Activated naive CD4-positive, alpha-beta T cell treated with anti-CD3 and anti-CD28 coated beads for 36 hours (primary cell): ENCODE measurements at regions of chr7 and their contacts with region 1.

Region 1: GRCh38 chr7:130615583-130615982 is 53.0 kb downstream of the COPG2 start:
- DNase-seq: no peak
- H3K4me3 Mint-ChIP-seq: no peak overlapping the region
- H3K27ac Mint-ChIP-seq: no peak overlapping the region
- H3K4me1 Mint-ChIP-seq: no peaks in the 10 kb centered on the region
- H3K27me3 Mint-ChIP-seq: no peaks in the 10 kb centered on the region

Region 2: GRCh38 chr7:130560970-130561369 is 54.6 kb before region 1 on chr7:
- CTCF ChIA-PET with region 1: no interaction called
- intact Hi-C with region 1: loop called (anchors 10 kb)
- DNase-seq: peak; percentile 25
- H3K4me3 Mint-ChIP-seq: no peak overlapping the region
- H3K27ac Mint-ChIP-seq: no peak overlapping the region
- H3K4me1 Mint-ChIP-seq: no peaks in the 10 kb centered on the region
- H3K27me3 Mint-ChIP-seq: no peaks in the 10 kb centered on the region

Region 3: DNA sequence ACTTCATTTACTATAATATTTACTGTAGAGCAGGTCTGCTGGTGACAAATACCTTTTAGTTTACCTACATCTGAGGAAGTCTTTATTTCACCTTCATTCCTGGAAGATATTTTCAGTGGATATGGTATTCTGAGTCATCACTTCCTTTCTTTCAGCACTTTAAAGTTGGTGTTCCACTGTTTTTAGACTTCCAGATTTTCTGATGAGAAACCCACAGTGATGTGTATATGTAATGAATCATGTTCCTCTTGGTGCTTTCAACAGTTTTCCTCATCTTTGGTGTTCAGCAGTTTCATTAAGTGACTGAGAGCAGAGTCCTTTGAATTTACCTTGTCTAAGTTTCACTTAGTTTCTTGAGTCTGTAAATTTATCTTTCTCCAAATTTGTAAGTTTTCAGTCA is 16.5 kb after region 1 on chr7:
- CTCF ChIA-PET with region 1: no interaction called
- intact Hi-C with region 1: no loop called
- DNase-seq: no peak
- H3K4me3 Mint-ChIP-seq: no peak overlapping the region
- H3K27ac Mint-ChIP-seq: no peak overlapping the region
- H3K4me1 Mint-ChIP-seq: peaks cover 3% of the 10 kb centered on the region
- H3K27me3 Mint-ChIP-seq: no peaks in the 10 kb centered on the region